CD8-positive, alpha-beta memory T cell (primary cell): ENCODE measurements at regions of chr14 and their contacts with region 1.

Region 1: GRCh38 chr14:50060871-50061663 is 55.3 kb downstream of the VCPKMT start:
- DNase-seq: peak in 4 of 5 donors; percentile 32 to 57 (median 43)
- H3K4me3 ChIP-seq: peak overlapping the region; percentile 61
- H3K4me3 Mint-ChIP-seq: peak overlapping the region; percentile 77 to 96 (median 90)
- H3K27ac ChIP-seq: peak overlapping the region; percentile 93
- H3K27ac Mint-ChIP-seq: peak overlapping the region; percentile 89 to 100 (median 99)
- H3K4me1 ChIP-seq: peaks cover 73% of the 10 kb centered on the region
- H3K4me1 Mint-ChIP-seq: peaks cover 71 to 94% (median 88%) of the 10 kb centered on the region in 3 donors
- H3K27me3 ChIP-seq: no peaks in the 10 kb centered on the region
- H3K27me3 Mint-ChIP-seq: no peaks in the 10 kb centered on the region

Region 2: DNA sequence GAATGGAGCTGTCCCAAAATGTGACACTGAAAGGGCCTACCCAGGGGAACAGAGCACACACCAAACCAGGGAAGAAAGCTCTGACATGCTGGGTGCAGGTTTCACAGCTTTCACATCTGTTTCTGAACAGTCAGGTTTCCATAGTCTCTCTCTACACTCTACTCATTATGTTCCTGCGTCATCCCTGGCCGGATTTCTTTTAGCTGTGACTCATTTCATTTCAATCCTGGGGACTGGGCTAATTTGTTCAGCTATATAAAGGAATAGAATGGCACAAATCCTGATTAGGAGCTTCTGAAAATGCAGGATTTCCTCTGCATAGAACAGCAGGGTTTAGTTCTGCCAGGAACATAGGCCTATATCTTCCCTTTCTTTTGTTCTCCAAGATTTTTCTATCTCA is 1124.7 kb before region 1 on chr14:
- CTCF ChIA-PET with region 1: no interaction called
- POLR2A ChIA-PET with region 1: no interaction called
- DNase-seq: no peak
- H3K4me3 ChIP-seq: no peak overlapping the region
- H3K4me3 Mint-ChIP-seq: no peak overlapping the region
- H3K27ac ChIP-seq: no peak overlapping the region
- H3K27ac Mint-ChIP-seq: no peak overlapping the region
- H3K4me1 ChIP-seq: no peaks in the 10 kb centered on the region
- H3K4me1 Mint-ChIP-seq: no peaks in the 10 kb centered on the region
- H3K27me3 ChIP-seq: no peaks in the 10 kb centered on the region
- H3K27me3 Mint-ChIP-seq: no peaks in the 10 kb centered on the region

Region 3: DNA sequence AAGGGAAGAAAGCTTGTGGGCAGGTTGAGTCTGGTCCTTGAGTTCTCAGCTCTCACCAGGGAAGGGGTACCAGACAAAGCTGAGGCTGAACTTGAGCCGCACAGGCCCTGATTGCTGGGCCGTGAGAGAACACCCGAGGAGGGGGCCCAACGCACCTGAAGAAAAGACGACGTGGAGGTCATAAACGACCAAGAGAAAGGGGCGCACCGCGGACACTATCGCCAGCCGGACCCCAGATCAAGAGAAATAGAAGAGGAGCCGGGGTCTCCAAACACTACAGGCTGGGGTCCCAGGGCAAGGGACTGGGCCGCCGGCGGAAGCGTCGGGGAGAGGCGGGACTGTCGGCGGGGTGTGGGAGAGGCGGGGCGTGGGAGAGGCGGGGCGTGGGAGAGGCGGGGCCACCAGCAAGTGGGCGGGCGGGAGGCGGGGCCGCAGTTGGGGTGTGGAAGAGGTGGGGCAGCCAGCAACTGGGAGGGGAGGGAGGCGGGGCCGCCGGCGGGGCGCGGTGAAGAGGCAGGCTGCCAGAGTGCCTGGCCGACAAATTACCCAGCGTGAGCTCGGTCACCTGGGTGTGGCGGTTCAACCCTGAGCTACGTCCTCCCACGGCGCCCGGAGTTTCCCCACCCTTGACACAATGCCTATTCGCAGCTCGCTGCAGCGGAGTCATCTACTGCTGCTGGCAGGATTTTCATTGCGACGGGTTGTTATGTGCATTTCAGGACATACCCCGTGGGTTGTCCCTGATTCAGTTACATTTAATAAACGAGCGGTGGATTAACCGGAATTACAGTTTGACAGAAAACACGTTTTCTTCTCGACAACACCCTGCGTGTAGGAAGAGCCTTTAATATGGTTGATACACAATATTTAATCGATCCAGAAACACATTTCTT is 193.0 kb before region 1 on chr14:
- CTCF ChIA-PET with region 1: interaction called, 85 read pairs
- POLR2A ChIA-PET with region 1: interaction called, 53 read pairs
- DNase-seq: peak; percentile 93 to 99 (median 97)
- H3K4me3 ChIP-seq: peak overlapping the region; percentile 76
- H3K4me3 Mint-ChIP-seq: peak overlapping the region; percentile 77 to 93 (median 89)
- H3K27ac ChIP-seq: peak overlapping the region; percentile 75
- H3K27ac Mint-ChIP-seq: peak overlapping the region; percentile 92 to 99 (median 98)
- H3K4me1 ChIP-seq: peaks cover 40% of the 10 kb centered on the region
- H3K4me1 Mint-ChIP-seq: peaks cover 17 to 30% (median 17%) of the 10 kb centered on the region in 3 donors
- H3K27me3 ChIP-seq: no peaks in the 10 kb centered on the region
- H3K27me3 Mint-ChIP-seq: no peaks in the 10 kb centered on the region

Region 4: GRCh38 chr14:49892636-49893308 is 168.3 kb before region 1 on chr14 and contains the start of gene ARF6:
- CTCF ChIA-PET with region 1: interaction called, 14 read pairs
- POLR2A ChIA-PET with region 1: interaction called, 16 read pairs
- DNase-seq: peak; percentile 92 to 96 (median 94)
- H3K4me3 ChIP-seq: peak within 1 kb of the TSS; percentile 85
- H3K4me3 Mint-ChIP-seq: peak within 1 kb of the TSS; percentile 92 to 100 (median 99)
- H3K27ac ChIP-seq: peak within 1 kb of the TSS; percentile 97
- H3K27ac Mint-ChIP-seq: peak within 1 kb of the TSS; percentile 97 to 100 (median 99)
- H3K4me1 ChIP-seq: peaks cover 31% of the 10 kb centered on the region
- H3K4me1 Mint-ChIP-seq: peaks cover 30 to 44% (median 32%) of the 10 kb centered on the region in 3 donors
- H3K27me3 ChIP-seq: no peaks in the 10 kb centered on the region
- H3K27me3 Mint-ChIP-seq: peaks cover 0 to 1% of the 10 kb centered on the region in 2 donors
- total RNA-seq, gene ARF6: 168 TPM

Region 5: DNA sequence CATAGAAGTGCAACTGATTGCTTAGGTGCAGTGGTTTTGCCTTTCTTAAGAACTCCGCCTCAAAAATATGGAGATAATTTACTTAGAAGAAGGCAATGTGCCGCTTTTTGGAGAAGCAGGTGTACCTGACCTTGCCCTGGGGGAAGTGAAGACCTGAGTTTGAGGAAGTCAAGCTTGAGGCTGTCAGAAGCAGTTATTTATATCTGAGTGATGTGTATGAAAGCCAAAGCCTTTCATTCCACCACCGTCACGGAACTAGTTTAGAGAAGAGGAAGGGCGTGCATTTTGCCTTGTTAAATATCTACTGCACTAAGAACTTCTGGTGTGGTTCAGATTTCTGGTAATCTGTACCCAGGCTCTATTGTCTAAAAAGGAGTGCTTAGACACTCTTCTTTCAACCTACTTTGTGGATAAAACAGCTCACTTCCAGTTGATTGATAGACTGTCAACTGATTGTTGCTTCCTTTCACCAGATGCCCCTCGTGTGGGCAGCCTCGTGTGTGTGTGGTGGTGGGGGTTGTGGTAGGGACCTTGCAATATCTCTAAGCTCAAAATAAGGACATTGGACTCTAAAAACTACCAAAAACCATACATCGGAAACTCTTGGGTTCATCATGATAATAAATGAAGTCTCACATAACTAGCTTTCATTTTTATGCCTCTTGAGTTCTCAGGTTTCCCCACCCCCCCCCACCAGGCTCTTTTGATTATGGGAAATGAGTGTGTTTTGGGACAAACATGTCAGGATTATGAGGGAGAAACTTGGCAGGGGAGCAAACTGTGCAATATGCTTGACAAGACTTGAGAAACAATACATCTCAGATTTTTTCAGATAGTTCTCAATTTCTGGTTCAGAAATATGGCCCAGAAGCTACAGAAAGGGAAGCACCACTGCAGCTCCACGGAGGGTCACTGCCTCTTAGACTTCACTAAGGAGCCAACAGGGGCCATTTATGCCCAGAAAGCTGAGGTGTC is 89.6 kb before region 1 on chr14:
- CTCF ChIA-PET with region 1: interaction called, 9 read pairs
- POLR2A ChIA-PET with region 1: interaction called, 16 read pairs
- DNase-seq: peak in 3 of 5 donors; percentile 61 to 84 (median 66)
- H3K4me3 ChIP-seq: peak overlapping the region; percentile 41
- H3K4me3 Mint-ChIP-seq: peak overlapping the region; percentile 60 to 85 (median 79)
- H3K27ac ChIP-seq: peak overlapping the region; percentile 54
- H3K27ac Mint-ChIP-seq: peak overlapping the region; percentile 91 to 100 (median 94)
- H3K4me1 ChIP-seq: peaks cover 56% of the 10 kb centered on the region
- H3K4me1 Mint-ChIP-seq: peaks cover 41 to 68% (median 62%) of the 10 kb centered on the region in 3 donors
- H3K27me3 ChIP-seq: no peaks in the 10 kb centered on the region
- H3K27me3 Mint-ChIP-seq: peaks cover 0 to 2% of the 10 kb centered on the region in 2 donors

Region 6: GRCh38 chr14:50045039-50045711 is 15.9 kb before region 1 on chr14:
- CTCF ChIA-PET with region 1: interaction called, 20 read pairs
- POLR2A ChIA-PET with region 1: interaction called, 22 read pairs
- DNase-seq: peak; percentile 39 to 83 (median 63)
- H3K4me3 ChIP-seq: peak overlapping the region; percentile 1
- H3K4me3 Mint-ChIP-seq: peak overlapping the region in 6 of 7 donors; percentile 34 to 88 (median 62)
- H3K27ac ChIP-seq: no peak overlapping the region
- H3K27ac Mint-ChIP-seq: peak overlapping the region; percentile 91 to 99 (median 95)
- H3K4me1 ChIP-seq: peaks cover 60% of the 10 kb centered on the region
- H3K4me1 Mint-ChIP-seq: peaks cover 57 to 77% (median 73%) of the 10 kb centered on the region in 3 donors
- H3K27me3 ChIP-seq: no peaks in the 10 kb centered on the region
- H3K27me3 Mint-ChIP-seq: no peaks in the 10 kb centered on the region

Region 7: GRCh38 chr14:50101417-50101816 is 40.4 kb after region 1 on chr14:
- CTCF ChIA-PET with region 1: interaction called, 20 read pairs
- POLR2A ChIA-PET with region 1: interaction called, 6 read pairs
- DNase-seq: no peak
- H3K4me3 ChIP-seq: no peak overlapping the region
- H3K4me3 Mint-ChIP-seq: no peak overlapping the region
- H3K27ac ChIP-seq: no peak overlapping the region
- H3K27ac Mint-ChIP-seq: peak overlapping the region in 2 of 8 donors; percentile 74 to 87
- H3K4me1 ChIP-seq: peaks cover 55% of the 10 kb centered on the region
- H3K4me1 Mint-ChIP-seq: peaks cover 37 to 62% (median 53%) of the 10 kb centered on the region in 3 donors
- H3K27me3 ChIP-seq: no peaks in the 10 kb centered on the region
- H3K27me3 Mint-ChIP-seq: no peaks in the 10 kb centered on the region